Activated CD4-positive, alpha-beta T cell treated with anti-CD3 and anti-CD28 coated beads, Interleukin-2, amount 10 ng/mL, durations not matched to agents 24 days and 14 days (primary cell): ENCODE measurements at regions of chr12 and their contacts with region 1.

Region 1: DNA sequence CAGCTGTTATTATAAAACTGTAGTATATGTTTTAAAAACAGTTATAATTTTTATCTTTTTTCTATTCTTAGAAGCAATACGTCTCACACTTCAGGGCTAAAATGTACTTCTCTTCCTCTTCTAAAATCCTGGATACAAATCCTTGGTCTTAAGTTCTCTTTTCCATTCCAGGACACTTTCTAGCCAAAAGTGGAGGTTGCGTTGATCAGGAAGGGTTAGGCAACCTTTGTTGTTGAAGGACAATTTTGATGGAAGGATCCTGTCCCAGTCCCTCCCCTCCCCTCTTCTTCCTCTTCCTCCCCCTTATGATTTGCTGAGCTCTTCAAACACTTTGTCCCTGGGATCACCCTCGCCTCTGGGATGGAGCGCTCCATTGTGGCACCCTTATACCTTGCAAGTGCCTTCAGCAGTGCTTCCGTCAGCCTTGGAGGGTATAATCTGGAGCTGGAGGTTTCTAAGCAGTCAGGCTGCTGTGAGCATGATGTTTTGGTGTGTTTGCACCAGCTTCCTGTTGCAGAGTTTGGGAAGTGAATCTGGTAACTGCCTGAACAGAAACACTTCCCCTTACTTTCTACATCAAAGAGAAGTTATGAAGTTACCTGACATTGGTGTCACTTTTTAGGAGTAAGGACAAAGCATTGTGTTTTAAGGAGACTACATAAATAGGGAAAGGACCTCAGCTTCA is 87.4 kb upstream of the SLC38A2 start:
- DNase-seq: peak; percentile 81
- H3K4me3 Mint-ChIP-seq: peak overlapping the region; percentile 85
- H3K27ac Mint-ChIP-seq: peak overlapping the region; percentile 99
- H3K4me1 Mint-ChIP-seq: peaks cover 53% of the 10 kb centered on the region
- H3K27me3 Mint-ChIP-seq: no peaks in the 10 kb centered on the region

Region 2: DNA sequence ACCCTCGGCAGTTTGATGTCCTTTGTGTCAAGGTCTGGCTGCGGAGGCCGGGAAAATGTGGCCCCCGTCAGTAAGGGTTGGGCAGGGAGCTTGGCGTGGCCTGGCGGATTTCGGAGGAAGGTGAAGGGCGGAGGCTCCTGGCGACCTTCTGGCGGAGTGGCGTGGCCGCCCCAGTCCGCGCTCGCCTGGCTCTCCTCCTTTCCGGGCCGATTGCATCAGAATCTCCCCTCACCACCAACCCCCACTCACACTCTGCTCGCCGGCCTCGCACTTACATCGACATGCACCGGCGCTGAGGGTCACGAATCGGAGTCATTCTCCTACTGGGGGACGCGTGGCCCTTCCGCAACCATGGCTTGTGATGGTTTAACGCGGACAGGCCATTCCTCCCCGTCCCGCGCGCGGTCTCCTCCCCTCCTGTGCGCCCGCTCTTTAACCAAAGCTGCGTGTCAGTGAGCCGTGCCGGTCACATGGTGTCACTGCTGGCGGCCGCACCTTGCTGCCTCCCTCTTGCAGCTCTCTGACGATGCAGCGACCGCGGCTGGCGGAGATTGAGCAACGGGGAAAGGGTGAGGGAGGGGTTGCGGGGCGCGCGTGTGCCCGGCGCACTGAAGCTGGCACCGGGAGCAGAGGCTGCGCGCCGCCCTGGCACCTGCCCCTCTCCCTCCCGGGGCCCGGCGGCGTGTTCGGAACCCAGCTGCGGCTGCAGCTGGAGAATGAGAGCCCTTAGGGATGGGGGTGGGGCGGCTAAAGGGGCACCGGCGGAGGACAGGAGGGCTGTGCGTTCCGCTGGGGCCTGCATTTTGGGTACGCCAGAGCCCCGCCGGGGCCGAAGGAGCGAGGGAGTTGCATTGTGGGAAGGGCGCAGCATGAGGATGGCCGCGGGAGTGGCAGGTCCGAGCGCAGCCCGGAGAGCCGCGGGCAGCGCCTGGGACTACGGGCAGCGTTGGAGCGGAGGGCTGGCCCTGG is 191.1 kb before region 1 on chr12 and contains the start of gene SLC38A1:
- intact Hi-C with region 1: loop called (anchors 2 kb)
- DNase-seq: peak; percentile 96
- H3K4me3 Mint-ChIP-seq: no peak within 1 kb of the TSS
- H3K27ac Mint-ChIP-seq: no peak within 1 kb of the TSS
- H3K4me1 Mint-ChIP-seq: peaks cover 21% of the 10 kb centered on the region
- H3K27me3 Mint-ChIP-seq: no peaks in the 10 kb centered on the region
- total RNA-seq, gene SLC38A1: 180 and 181 TPM in 2 replicates

Region 3: DNA sequence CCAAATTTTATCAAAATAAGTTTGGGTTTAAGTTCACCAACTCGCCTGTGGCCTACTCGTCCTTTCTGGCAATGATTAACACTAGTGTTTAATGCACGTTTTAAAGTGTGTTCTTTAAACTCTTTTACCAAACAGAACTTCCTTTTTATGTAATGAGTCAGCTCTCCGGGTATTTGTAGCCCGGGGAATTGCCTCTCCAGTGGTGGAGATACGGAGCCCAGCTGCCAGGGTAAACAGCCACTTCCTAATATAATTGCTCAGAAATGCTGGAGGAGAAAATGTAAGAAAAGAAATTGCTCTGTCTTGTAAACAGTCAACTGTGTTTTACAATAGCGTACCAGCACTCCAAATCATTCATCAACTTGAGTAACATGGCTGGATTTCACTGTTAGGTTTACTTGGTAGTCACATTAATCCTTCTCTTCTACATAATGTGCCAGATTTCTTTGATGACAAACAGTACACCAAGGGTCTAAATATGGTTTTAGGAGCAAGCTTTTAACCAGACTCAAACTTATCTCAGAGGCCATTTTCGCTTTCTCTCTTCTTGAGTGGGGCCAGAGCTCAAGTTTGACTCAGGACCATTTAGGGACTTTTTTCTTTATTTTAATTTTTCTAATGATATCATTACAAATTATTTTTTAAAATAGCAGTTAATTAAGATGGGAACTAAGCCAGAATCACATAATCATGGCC is 13.8 kb after region 1 on chr12:
- intact Hi-C with region 1: loop called (anchors 1 kb)
- DNase-seq: peak; percentile 62
- H3K4me3 Mint-ChIP-seq: peak overlapping the region; percentile 61
- H3K27ac Mint-ChIP-seq: peak overlapping the region; percentile 74
- H3K4me1 Mint-ChIP-seq: peaks cover 41% of the 10 kb centered on the region
- H3K27me3 Mint-ChIP-seq: no peaks in the 10 kb centered on the region

Region 4: GRCh38 chr12:46523863-46524770 is 64.1 kb after region 1 on chr12:
- intact Hi-C with region 1: loop called (anchors 2 kb)
- DNase-seq: peak; percentile 87
- H3K4me3 Mint-ChIP-seq: peak overlapping the region; percentile 76
- H3K27ac Mint-ChIP-seq: peak overlapping the region; percentile 94
- H3K4me1 Mint-ChIP-seq: peaks cover 51% of the 10 kb centered on the region
- H3K27me3 Mint-ChIP-seq: no peaks in the 10 kb centered on the region

Region 5: DNA sequence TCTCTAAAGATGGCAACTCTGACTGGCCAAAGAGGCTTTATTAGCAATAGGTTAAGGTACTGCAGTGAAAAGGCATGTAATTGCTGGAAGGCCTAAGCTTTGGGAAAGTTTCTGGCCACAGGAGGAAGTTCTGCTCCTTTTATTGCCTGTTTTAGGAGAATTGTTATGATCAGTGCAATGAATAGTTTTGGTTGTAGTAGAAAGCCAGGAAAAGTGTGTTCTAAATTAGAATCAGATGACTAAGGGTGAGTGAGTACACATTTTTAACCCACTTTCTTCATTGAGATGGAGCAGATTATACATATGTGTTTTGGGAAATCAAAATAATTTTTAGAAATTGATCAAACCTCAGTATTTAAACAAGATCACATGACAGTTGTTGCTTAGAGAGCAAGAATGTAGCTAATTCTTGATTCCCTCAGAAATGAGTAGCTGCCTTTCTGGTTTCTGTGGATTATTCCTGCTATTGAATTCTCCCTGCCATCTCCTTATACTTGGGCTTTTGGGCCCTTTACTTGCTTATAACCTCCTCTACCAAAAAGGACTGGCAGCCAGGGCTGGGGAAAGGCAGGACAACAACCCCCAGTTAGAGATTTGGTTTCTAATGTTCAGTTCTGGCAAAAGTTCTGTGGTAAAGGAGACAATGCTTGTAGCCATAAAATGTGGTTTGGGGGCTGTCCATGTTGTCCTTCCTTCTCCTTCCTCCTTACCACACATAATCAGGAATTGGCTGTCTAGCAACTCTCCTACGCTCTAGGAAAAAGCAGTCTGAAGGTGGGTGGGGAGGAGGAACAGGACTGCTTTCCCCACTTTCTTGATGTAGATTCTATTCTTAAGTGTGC is 148.6 kb after region 1 on chr12:
- intact Hi-C with region 1: loop called (anchors 5 kb)
- DNase-seq: no peak
- H3K4me3 Mint-ChIP-seq: peak overlapping the region; percentile 69
- H3K27ac Mint-ChIP-seq: peak overlapping the region; percentile 67
- H3K4me1 Mint-ChIP-seq: peaks cover 24% of the 10 kb centered on the region
- H3K27me3 Mint-ChIP-seq: no peaks in the 10 kb centered on the region

Region 6: GRCh38 chr12:47812797-47813510 is 1353.0 kb after region 1 on chr12:
- intact Hi-C with region 1: loop called (anchors 5 kb)
- DNase-seq: peak; percentile 97
- H3K4me3 Mint-ChIP-seq: peak overlapping the region; percentile 88
- H3K27ac Mint-ChIP-seq: peak overlapping the region; percentile 99
- H3K4me1 Mint-ChIP-seq: peaks cover 81% of the 10 kb centered on the region
- H3K27me3 Mint-ChIP-seq: no peaks in the 10 kb centered on the region